ENCODE measurements at regions of chr10 and their contacts with region 1.

Region 1: DNA sequence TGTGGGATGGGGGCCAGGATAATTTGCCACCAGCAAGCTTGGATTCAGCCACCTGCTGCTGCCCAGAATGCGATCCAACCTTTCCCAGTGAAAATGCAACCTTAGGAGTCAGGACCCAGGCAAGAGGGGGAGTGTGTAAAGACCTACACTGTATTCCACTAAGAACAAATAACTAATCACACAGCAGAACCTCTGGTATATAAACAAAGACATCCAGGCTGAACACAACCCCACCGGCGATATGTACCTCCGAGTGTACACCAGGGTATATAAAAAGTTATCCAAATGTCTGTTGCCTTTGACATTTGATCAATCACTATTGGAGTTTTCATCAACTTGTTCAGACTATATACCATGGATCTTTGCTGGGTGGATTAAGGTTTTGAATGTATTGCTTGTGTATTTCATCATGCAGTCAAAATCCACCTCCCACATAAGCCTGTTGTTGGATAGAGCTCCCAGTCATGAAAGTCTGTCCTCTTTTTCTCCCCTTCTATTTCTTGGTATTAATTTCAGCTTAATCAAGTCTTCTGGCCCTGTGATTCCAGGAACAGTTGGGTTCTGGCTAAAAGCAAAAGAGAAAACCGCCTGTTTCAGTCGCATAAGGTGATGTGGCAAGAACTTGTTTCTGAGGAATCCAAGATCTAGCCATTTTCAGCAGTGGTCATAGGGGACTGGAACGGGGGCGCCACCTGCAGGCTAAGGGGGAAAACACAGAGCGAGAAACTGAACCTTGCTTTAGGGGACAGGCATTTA is 290.7 kb downstream of the CCDC3 start:
- DNase-seq: peak; percentile 63
- ATAC-seq: peak; percentile 25
- H3K4me3 ChIP-seq: no peak overlapping the region
- H3K27ac ChIP-seq: peak overlapping the region; percentile 100; the same call in 1 of the 2 replicates
- H3K4me1 ChIP-seq: peaks cover 62% of the 10 kb centered on the region
- H3K27me3 ChIP-seq: no peaks in the 10 kb centered on the region
- CTCF ChIP-seq: peak; percentile 76

Region 2: DNA sequence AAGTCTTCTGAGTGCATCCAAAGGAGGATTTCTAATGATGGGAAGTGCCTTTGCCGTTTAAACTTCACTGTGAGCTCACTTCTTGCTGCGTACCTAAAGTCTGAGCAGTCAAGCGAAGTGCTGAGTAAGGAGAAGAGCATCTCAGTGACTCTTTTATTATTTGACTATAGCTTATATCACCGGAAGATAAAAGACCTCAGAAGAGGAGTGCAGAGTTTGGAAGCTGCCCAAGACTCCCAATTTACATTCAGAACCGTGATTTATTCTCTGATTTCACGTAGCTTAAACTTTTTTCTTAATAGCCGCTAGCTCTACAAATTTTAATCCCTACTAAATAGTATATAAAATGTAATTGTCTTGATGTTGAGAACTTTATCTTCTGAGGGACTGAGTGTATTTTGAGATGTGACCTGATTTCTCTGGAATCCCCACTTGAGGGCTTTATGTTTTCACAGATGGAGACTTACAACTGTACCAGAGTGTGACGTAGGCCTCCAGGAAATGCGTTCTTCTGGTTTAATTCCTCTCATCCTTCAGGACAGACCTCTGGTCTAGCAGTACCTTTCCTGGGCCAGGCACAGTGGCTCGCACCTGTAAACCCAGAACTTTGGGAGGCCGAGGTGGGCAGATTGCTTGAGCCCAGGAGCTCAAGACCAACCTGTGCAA is 310.4 kb before region 1 on chr10:
- CTCF ChIA-PET with region 1: interaction called, 4 read pairs
- POLR2A ChIA-PET with region 1: interaction called, 3 read pairs
- intact Hi-C with region 1: loop called (anchors 5 kb)
- DNase-seq: peak; percentile 79
- ATAC-seq: peak; percentile 84
- H3K4me3 ChIP-seq: peak overlapping the region; percentile 42; the same call in 1 of the 2 replicates
- H3K27ac ChIP-seq: peak overlapping the region; percentile 92
- H3K4me1 ChIP-seq: peaks cover 29% of the 10 kb centered on the region
- H3K27me3 ChIP-seq: no peaks in the 10 kb centered on the region
- CTCF ChIP-seq: no peak